ENCODE measurements at regions of chr2 and their contacts with region 1.

Region 1: DNA sequence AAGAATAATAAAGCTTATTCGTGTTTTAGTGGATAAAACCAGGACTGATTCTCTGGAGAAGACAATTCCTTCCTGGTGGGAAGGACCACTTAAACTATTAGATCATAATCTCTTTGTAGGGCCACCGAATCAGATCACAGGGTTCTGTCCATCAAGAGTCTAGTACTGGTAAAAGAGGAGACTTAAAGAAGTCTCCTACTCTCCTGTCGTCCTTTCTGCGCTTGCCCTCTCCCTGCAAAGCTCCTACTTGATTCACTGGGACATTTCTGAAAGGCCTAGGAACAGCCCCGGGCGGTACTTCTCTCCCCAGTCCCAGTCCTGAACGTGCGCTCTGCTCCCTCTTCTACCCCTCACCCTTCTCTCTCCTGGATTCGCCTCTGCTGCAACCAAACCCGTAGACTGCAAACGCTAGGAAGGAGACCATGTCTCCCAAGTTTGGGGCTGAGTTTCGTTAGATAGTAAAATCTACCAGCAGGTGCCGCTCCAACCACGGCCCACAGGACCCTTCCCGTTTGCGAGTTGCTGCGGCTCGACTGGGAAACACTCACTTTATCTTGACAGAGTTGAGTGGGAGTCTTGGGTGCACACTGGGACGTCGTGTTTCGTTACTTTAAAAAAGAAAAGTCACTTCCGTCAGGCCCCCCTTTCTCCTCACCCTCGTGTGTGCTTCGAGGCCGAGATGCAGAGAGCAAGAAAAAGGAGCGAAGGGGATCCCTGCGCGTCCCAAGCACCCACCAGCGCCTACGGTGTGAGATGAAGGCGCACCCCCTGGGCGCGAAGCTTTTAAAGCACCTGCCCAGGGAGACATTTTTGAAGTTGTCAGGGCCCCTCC is 923 bp downstream of the FIGLA start:
- DNase-seq: peak; percentile 78 to 85
- ATAC-seq: peak; percentile 86 to 96
- H3K4me3 ChIP-seq: peak overlapping the region; percentile 45
- H3K27ac ChIP-seq: 0 out of 6 replicates have a peak overlapping the region, but pooled peaks of 1 of the 2 experiments have one; percentile 11
- H3K4me1 ChIP-seq: peaks cover 7% of the 10 kb centered on the region; the same call in 1 of the 3 replicates
- CTCF ChIP-seq: peak; percentile 98
- EP300 ChIP-seq: no peak
- POLR2A ChIP-seq: no peak
- RAD21 ChIP-seq: peak; percentile 90 to 94

Region 2: GRCh38 chr2:70656421-70657010 is 133.0 kb before region 1 on chr2:
- CTCF ChIA-PET with region 1: interaction called, 32 read pairs
- POLR2A ChIA-PET with region 1: no interaction called
- DNase-seq: no peak
- ATAC-seq: no peak
- H3K4me3 ChIP-seq: no peak overlapping the region
- H3K27ac ChIP-seq: no peak overlapping the region
- H3K4me1 ChIP-seq: no peaks in the 10 kb centered on the region
- CTCF ChIP-seq: no peak
- EP300 ChIP-seq: no peak
- POLR2A ChIP-seq: no peak
- RAD21 ChIP-seq: no peak

Region 3: GRCh38 chr2:70767699-70768589 is 21.6 kb before region 1 on chr2 and contains the start of gene ADD2:
- CTCF ChIA-PET with region 1: interaction called, 52 read pairs
- POLR2A ChIA-PET with region 1: no interaction called
- DNase-seq: peak; percentile 76 to 81
- ATAC-seq: peak; percentile 86 to 94
- H3K4me3 ChIP-seq: peak within 1 kb of the TSS; percentile 68
- H3K27ac ChIP-seq: peak within 1 kb of the TSS; percentile 77 to 92
- H3K4me1 ChIP-seq: peaks cover 11% of the 10 kb centered on the region
- CTCF ChIP-seq: peak; percentile 97
- EP300 ChIP-seq: no peak
- POLR2A ChIP-seq: peak; percentile 81
- RAD21 ChIP-seq: peak; percentile 31 to 68; a peak in 4 of 5 replicates
- polyA plus RNA-seq, gene ADD2: 25.5 and 28.4 TPM in 2 replicates

Region 4: DNA sequence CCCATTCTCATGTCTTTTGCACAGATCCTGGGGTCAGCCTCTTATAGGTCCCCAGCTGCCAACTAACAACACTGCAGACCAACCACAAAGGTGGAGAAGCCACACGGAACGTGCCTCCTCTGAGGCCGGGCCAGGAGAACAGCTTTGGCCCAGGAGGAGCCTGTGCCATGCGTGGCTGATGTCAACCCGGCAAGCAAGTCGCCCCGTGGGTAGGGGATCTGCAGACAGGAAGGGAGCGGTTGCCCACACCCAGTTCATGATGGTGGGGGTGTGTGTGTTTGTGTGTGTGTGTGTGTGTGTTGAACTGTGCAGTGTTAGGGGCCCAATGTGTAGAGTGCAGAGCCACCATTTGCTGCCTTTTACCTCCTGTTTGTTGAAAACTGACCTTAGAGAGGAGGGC is 33.3 kb after region 1 on chr2:
- CTCF ChIA-PET with region 1: interaction called, 10 read pairs
- POLR2A ChIA-PET with region 1: no interaction called
- DNase-seq: no peak
- ATAC-seq: no peak
- H3K4me3 ChIP-seq: no peak overlapping the region
- H3K27ac ChIP-seq: no peak overlapping the region
- H3K4me1 ChIP-seq: no peaks in the 10 kb centered on the region
- CTCF ChIP-seq: no peak
- EP300 ChIP-seq: no peak
- POLR2A ChIP-seq: no peak
- RAD21 ChIP-seq: no peak

Region 5: GRCh38 chr2:70871398-70872211 is 82.1 kb after region 1 on chr2:
- CTCF ChIA-PET with region 1: interaction called, 78 read pairs
- POLR2A ChIA-PET with region 1: no interaction called
- DNase-seq: peak; percentile 84 to 88
- ATAC-seq: peak; percentile 97 to 99
- H3K4me3 ChIP-seq: peak overlapping the region; percentile 32
- H3K27ac ChIP-seq: no peak overlapping the region
- H3K4me1 ChIP-seq: peaks cover 5% of the 10 kb centered on the region; the same call in 2 of the 3 replicates
- CTCF ChIP-seq: peak; percentile 98
- EP300 ChIP-seq: no peak
- POLR2A ChIP-seq: no peak
- RAD21 ChIP-seq: peak; percentile 97 to 98

Region 6: DNA sequence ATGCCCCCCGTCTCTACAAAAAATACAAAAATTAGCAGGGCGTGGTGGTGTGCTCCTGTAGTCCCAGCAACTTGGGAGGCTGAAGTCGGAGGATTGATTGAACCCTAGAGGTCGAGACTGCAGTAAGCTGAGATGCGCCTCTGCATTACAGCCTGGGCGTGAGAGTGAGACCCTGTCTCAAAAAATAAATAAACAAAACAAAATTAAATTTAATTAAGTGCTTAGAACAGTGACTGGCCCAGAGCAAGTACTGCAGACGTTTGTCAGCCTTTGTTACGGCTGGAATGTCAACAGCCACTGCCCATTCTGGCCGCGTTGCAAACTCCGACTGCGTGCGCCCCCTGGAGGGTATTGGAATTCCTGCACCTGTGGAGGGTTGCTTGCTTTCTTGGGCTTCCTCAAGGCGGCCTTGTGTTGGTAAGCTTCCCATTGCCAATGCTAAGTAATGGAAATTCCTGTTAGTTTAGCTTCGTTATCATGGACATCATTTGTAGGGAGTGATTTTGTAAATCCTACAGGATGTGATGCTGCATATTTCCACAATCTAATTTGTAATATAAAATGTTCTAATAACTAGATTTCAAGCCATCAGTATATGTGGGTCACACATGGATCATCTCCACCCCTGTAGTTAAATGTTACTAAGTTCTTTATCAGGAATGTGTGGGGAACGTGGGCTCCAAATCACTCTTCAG is 130.3 kb after region 1 on chr2:
- CTCF ChIA-PET with region 1: interaction called, 29 read pairs
- POLR2A ChIA-PET with region 1: no interaction called
- DNase-seq: peak; percentile 77 to 87
- ATAC-seq: peak; percentile 90 to 95
- H3K4me3 ChIP-seq: no peak overlapping the region
- H3K27ac ChIP-seq: no peak overlapping the region
- H3K4me1 ChIP-seq: no peaks in the 10 kb centered on the region
- CTCF ChIP-seq: peak; percentile 97
- EP300 ChIP-seq: no peak
- POLR2A ChIP-seq: no peak
- RAD21 ChIP-seq: peak; percentile 81 to 89

Region 7: DNA sequence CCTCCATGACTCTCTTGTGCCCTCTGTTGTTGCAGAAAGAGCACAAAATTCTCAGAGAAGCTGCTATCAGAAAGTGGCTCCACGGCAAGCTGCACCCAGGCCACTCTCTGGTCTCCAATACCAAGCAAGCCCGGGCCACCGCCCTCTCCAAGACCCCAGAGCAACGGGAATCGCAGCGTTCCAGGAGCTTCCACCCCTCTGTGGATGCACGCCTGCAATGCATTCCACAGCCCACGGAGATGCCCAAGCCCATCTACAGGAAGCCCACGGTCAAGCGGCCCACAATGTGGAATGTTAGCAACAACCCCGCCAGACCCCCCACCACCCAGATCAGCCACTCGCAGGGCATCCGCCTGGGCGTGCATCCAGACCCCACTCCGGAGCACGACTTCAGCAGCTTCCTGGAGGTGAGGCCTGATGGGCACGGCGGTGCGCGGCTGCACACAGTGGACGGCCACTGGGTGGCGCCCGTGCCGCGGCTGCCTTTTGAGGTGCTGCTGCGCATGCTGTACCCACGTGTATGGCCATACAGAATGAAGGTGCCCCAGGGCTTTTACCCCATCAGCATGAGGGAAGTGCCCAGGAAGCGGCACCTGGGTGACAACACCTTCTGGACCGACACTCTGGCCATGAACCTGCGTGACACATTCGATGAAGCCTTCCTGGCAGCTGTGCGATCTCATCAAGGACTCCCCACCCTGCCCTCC is 195.2 kb after region 1 on chr2:
- CTCF ChIA-PET with region 1: interaction called, 13 read pairs
- POLR2A ChIA-PET with region 1: no interaction called
- DNase-seq: peak; percentile 67 to 79
- ATAC-seq: peak; percentile 87 to 98
- H3K4me3 ChIP-seq: no peak overlapping the region
- H3K27ac ChIP-seq: no peak overlapping the region
- H3K4me1 ChIP-seq: no peaks in the 10 kb centered on the region
- CTCF ChIP-seq: peak; percentile 67
- EP300 ChIP-seq: no peak
- POLR2A ChIP-seq: no peak
- RAD21 ChIP-seq: peak in 1 of 2 experiments; percentile 20; a peak in 1 of 5 replicates

Region 8: DNA sequence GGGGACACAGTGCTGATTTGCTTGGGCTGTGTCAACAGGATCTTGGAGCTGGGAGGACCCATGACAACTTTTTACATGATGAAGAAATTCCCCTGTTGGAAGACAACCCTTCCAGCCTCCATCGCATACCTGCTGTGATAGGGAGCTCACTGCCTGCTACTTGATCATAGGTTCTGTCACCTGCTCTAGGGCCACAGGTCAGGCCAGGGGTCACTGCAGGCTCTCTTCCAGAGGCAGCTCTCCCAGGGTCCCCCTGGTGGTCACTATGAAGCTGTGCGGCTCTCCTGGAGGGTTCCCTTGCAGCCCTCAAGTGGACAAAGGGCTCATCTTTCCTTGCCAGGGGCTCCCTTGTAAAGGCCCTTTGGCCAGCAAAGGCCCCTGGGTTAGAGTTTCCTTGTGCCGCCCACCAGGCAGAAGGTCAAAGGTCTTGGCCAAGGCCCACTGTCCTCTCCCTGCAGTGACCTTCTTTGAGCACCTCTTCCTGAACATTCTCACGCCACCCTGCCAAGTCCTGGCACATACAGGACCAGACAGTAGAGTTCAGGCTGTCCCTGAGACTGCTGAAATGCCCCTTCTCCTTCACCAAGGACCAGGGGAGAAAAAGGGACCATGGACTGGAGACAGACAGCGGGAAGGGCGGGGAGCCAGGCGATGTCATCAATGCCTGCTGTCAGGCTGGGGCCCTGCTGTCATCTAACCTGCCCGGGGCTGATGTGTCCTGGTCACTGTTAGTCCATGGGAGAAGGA is 1008.9 kb after region 1 on chr2:
- CTCF ChIA-PET with region 1: no interaction called
- POLR2A ChIA-PET with region 1: no interaction called
- DNase-seq: peak; percentile 71 to 74
- ATAC-seq: peak; percentile 73 to 90
- H3K4me3 ChIP-seq: no peak overlapping the region
- H3K27ac ChIP-seq: no peak overlapping the region
- H3K4me1 ChIP-seq: peaks cover 9% of the 10 kb centered on the region
- CTCF ChIP-seq: peak; percentile 79
- EP300 ChIP-seq: no peak
- POLR2A ChIP-seq: no peak
- RAD21 ChIP-seq: peak; percentile 70 to 75